GM12878 (cell line): ENCODE measurements at regions of chr4 and their contacts with region 1.

Region 1: GRCh38 chr4:39527273-39528060 is at the start of gene UGDH:
- DNase-seq: peak; percentile 82
- ATAC-seq: peak; percentile 98
- H3K4me3 ChIP-seq: peak within 1 kb of the TSS; percentile 95
- H3K27ac ChIP-seq: peak within 1 kb of the TSS; percentile 81
- H3K4me1 ChIP-seq: peaks cover 3% of the 10 kb centered on the region
- H3K27me3 ChIP-seq: no peaks in the 10 kb centered on the region
- CTCF ChIP-seq: peak in 2 of 3 experiments; percentile 2 to 34; a peak in 2 of 6 replicates
- EP300 ChIP-seq: no peak
- POLR2A ChIP-seq: peak; percentile 92
- RAD21 ChIP-seq: 0 out of 2 replicates have a peak, but pooled peaks have one; percentile 13
- polyA plus RNA-seq, gene UGDH: 11.1 to 11.3 TPM

Region 2: DNA sequence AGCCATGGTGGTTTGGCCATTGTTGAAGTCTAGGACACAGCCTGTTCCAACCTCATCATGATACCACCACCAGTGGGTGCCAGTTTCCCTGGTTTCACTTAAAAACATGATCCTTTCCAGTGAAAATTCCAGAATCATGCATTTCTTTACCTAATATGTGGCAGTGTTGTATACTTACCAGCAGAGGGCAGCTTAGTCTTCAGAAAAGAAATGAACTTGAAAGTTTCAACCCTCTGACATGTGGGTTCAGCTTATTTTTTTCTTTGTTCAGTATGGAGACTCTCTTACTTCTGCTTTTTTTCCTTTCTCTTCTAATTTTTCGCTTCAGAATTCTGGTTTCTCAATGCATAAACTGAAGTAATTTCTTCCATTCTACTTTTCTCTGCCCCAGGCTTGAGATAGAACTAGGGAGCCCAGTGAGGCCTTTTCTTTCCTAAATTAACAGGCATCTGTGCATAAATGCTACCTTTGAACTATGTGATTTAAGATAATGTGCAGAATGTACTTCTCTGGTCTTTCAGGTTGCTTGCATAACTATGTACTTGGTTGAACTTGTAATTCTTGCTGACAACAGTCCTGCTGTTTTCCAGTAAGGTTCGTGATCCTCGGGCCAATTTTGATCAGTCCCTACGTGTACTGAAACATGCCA is 57.9 kb before region 1 on chr4:
- CTCF ChIA-PET with region 1: interaction called, 11 read pairs
- POLR2A ChIA-PET with region 1: no interaction called
- RAD21 ChIA-PET with region 1: interaction called, 8 read pairs
- SMC1A ChIA-PET with region 1: interaction called, 10 read pairs
- in situ Hi-C with region 1: no loop called
- intact Hi-C with region 1: no loop called
- DNase-seq: peak; percentile 48
- ATAC-seq: peak; percentile 95
- H3K4me3 ChIP-seq: no peak overlapping the region
- H3K27ac ChIP-seq: peak overlapping the region; percentile 75; the same call in 1 of the 2 replicates
- H3K4me1 ChIP-seq: peaks cover 7% of the 10 kb centered on the region
- H3K27me3 ChIP-seq: no peaks in the 10 kb centered on the region
- CTCF ChIP-seq: peak; percentile 61 to 79 (median 79); a peak in 4 of 6 replicates
- EP300 ChIP-seq: no peak
- POLR2A ChIP-seq: no peak
- RAD21 ChIP-seq: peak; percentile 90

Region 3: GRCh38 chr4:39568815-39569608 is 41.5 kb after region 1 on chr4:
- CTCF ChIA-PET with region 1: interaction called, 8 read pairs
- POLR2A ChIA-PET with region 1: no interaction called
- RAD21 ChIA-PET with region 1: interaction called, 12 read pairs
- SMC1A ChIA-PET with region 1: interaction called, 6 read pairs
- in situ Hi-C with region 1: no loop called
- intact Hi-C with region 1: no loop called
- DNase-seq: peak; percentile 31
- ATAC-seq: peak; percentile 88
- H3K4me3 ChIP-seq: peak overlapping the region; percentile 8; the same call in 1 of the 2 replicates
- H3K27ac ChIP-seq: peak overlapping the region; percentile 82
- H3K4me1 ChIP-seq: peaks cover 7% of the 10 kb centered on the region
- H3K27me3 ChIP-seq: no peaks in the 10 kb centered on the region
- CTCF ChIP-seq: no peak
- EP300 ChIP-seq: no peak
- POLR2A ChIP-seq: no peak
- RAD21 ChIP-seq: no peak

Region 4: DNA sequence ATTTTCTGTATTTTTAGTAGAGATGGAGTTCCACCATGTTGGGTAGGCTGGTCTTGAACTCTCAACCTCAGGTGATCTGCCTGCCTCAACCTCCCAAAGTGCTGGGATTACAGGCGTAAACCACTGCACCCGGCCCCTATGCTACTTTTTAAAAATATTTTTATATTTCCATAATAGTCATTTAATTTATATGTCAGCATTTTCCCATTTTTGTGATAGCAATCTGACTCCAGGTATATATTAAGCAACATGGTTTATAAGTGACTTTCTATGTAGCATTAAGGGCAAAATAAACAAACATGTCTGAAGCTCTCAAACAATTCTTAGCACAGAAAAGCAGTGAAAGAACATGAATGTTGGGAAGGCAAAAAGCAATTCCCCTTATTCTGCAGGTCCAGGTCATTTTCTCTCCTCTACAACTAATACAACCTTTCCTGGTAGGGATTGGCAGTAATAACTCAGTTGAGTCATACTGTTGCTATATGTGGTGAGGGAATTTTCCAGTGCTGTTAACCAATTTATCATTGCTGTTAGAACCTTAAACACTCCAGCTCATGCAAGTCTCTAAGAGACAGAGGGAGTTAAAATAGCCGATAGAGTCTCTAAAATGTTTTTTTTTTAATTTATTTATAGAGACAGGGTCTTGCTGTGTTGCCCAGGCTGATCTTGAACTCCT is 87.2 kb after region 1 on chr4:
- CTCF ChIA-PET with region 1: no interaction called
- POLR2A ChIA-PET with region 1: interaction called, 4 read pairs
- RAD21 ChIA-PET with region 1: interaction called, 10 read pairs
- SMC1A ChIA-PET with region 1: interaction called, 13 read pairs
- in situ Hi-C with region 1: no loop called
- intact Hi-C with region 1: loop called (anchors 2 kb)
- DNase-seq: no peak
- ATAC-seq: peak; percentile 50
- H3K4me3 ChIP-seq: peak overlapping the region; percentile 48; the same call in 1 of the 2 replicates
- H3K27ac ChIP-seq: peak overlapping the region; percentile 91
- H3K4me1 ChIP-seq: peaks cover 59% of the 10 kb centered on the region
- H3K27me3 ChIP-seq: no peaks in the 10 kb centered on the region
- CTCF ChIP-seq: no peak
- EP300 ChIP-seq: peak; percentile 53 to 70; a peak in 3 of 4 replicates
- POLR2A ChIP-seq: no peak
- RAD21 ChIP-seq: no peak

Region 5: GRCh38 chr4:39631700-39632079 is 104.2 kb after region 1 on chr4:
- CTCF ChIA-PET with region 1: interaction called, 5 read pairs
- POLR2A ChIA-PET with region 1: interaction called, 14 read pairs
- RAD21 ChIA-PET with region 1: interaction called, 26 read pairs
- SMC1A ChIA-PET with region 1: interaction called, 7 read pairs
- in situ Hi-C with region 1: no loop called
- intact Hi-C with region 1: no loop called
- DNase-seq: no peak
- ATAC-seq: peak; percentile 78
- H3K4me3 ChIP-seq: no peak overlapping the region
- H3K27ac ChIP-seq: peak overlapping the region; percentile 59
- H3K4me1 ChIP-seq: peaks cover 26% of the 10 kb centered on the region
- H3K27me3 ChIP-seq: no peaks in the 10 kb centered on the region
- CTCF ChIP-seq: no peak
- EP300 ChIP-seq: peak in 1 of 2 experiments; percentile 70; a peak in 3 of 4 replicates
- POLR2A ChIP-seq: no peak
- RAD21 ChIP-seq: no peak

Region 6: DNA sequence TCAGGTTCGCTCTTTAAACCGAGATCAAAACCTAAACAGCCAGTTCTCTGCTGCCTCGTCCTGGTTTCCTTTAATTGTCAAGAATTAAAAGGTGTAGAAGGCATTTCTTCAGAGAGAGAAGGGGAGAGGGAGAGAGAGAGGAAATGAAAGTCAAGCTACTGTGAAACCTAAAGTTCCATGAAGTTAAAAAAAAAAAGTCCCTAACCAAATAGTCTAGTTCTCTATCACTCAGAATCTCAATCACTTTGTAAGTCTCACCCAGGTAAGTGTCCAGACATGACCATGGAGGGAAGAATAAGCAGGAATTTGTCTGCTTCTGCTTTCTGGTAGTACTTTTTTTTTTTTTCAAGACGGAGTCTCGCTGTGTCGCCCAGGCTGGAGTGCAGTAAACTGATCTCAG is 130.0 kb after region 1 on chr4:
- CTCF ChIA-PET with region 1: interaction called, 6 read pairs
- POLR2A ChIA-PET with region 1: no interaction called
- RAD21 ChIA-PET with region 1: interaction called, 10 read pairs
- SMC1A ChIA-PET with region 1: interaction called, 7 read pairs
- in situ Hi-C with region 1: no loop called
- intact Hi-C with region 1: no loop called
- DNase-seq: peak; percentile 67
- ATAC-seq: peak; percentile 88
- H3K4me3 ChIP-seq: no peak overlapping the region
- H3K27ac ChIP-seq: peak overlapping the region; percentile 3; the same call in 1 of the 2 replicates
- H3K4me1 ChIP-seq: peaks cover 31% of the 10 kb centered on the region
- H3K27me3 ChIP-seq: no peaks in the 10 kb centered on the region
- CTCF ChIP-seq: no peak
- EP300 ChIP-seq: peak in 1 of 2 experiments; percentile 76; a peak in 3 of 4 replicates
- POLR2A ChIP-seq: no peak
- RAD21 ChIP-seq: 0 out of 2 replicates have a peak, but pooled peaks have one; percentile 11